Right ventricle myocardium inferior (tissue), 1 donor: ENCODE measurements at regions of chr16 and their contacts with region 1.

Region 1: GRCh38 chr16:31458844-31459721 is at the start of gene ARMC5:
- DNase-seq: peak; percentile 98
- ATAC-seq: peak; percentile 89
- total RNA-seq, gene ARMC5: 5.5 TPM

Region 2: DNA sequence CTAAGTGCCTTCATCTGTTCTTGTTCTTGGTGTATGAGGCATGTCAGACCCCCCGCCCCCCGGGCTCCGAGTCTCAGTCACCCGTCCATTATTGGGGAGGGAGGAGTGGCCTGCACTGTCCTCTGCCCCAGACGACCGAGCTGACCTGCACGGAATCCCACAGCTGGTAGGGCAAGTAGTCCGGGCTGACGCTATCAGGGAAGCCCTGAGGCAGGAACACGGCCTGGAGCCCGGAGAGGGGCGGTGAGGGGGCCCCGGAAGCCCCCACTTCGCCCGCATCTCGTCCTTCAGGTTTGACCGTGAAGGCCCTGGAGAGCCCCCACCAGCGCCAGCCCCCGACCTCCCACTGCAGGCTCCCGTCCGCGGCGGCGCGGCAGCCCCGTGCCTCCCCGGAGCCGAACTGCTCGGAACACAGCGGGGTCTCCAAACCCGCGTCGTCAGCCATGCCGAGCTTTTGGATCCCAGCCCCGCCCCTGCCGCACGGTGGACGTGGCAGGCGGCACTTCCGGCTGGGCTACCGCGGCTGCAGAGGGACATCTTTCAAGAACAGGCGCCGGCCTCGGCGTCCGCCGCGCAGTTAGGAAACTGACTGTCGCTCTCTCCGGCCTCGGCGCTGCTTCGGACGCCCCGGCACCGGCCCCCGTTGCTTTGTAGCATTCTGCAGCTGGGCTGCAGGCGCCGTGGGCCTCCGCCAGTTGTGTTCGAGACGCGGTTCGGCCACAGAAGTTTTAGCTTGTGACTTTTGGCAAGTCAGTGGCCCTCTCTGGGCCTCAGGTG is 49.0 kb after region 1 on chr16 and contains the start of gene RUSF1:
- intact Hi-C with region 1: loop called (anchors 5 kb)
- DNase-seq: peak; percentile 97
- ATAC-seq: peak; percentile 96
- total RNA-seq, gene RUSF1: 19.9 TPM

Region 3: DNA sequence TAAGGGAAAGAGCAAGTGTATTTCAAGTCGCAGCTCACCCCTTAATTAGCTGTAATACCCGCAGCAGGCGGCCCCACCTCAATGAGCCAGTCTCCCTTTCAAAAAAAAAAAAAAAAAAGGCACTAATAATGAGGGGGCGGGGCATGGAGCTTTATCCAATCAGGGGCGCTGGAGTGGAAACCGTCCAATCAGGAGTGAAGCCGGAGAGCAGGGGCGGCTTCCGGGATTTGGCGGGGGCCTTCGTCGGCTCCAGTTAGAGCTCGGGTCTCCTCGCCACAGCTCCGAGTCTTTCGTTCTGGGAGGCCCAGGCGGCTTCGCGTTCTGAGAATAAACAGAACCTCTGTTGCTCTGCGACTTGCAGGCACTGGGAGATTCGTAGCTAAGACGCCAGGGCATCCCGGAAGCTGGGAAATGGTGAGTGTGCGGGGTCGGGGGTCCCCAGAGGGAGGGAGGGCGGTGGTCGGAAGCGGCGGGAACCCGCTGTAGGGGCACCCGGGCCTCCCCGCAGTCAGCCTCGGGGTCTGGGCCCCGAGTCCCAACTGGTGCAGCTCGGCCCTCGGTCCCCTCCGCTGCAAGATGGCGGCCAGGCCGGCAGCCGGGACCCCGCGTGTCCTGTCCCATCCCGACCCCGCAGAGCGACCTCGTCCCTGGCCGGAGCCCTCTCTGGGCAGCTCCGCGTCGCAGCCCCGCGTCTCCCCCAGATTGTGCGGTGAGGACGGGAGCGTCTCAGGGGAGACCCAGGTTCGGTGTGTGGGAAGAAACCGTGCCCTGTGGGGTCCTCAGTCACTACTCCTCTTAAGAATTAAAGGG is 414.7 kb after region 1 on chr16 and contains the start of gene ZNF267:
- intact Hi-C with region 1: loop called (anchors 5 kb)
- DNase-seq: peak; percentile 96
- ATAC-seq: peak; percentile 96
- total RNA-seq, gene ZNF267: 6.6 TPM